Breast epithelium (tissue), 4 donors: ENCODE measurements at regions of chr17 and their contacts with region 1.

Region 1: GRCh38 chr17:79702550-79703236 is 28.1 kb upstream of the ENPP7 start:
- DNase-seq: no peak
- H3K4me3 ChIP-seq: no peak overlapping the region
- H3K27ac ChIP-seq: no peak overlapping the region
- H3K4me1 ChIP-seq: no peaks in the 10 kb centered on the region
- H3K27me3 ChIP-seq: peaks cover 0 to 64% of the 10 kb centered on the region in 2 donors
- CTCF ChIP-seq: no peak
- POLR2A ChIP-seq: no peak

Region 2: GRCh38 chr17:79658811-79659207 is 43.9 kb before region 1 on chr17:
- intact Hi-C with region 1: loop called (anchors 1 kb)
- DNase-seq: peak in 1 of 2 donors; percentile 49
- H3K4me3 ChIP-seq: no peak overlapping the region
- H3K27ac ChIP-seq: no peak overlapping the region
- H3K4me1 ChIP-seq: no peaks in the 10 kb centered on the region
- H3K27me3 ChIP-seq: peaks cover 0 to 6% of the 10 kb centered on the region in 2 donors
- CTCF ChIP-seq: peak in 1 of 3 donors; percentile 11
- POLR2A ChIP-seq: no peak